ENCODE measurements at regions of chr1 and their contacts with region 1.

Region 1: DNA sequence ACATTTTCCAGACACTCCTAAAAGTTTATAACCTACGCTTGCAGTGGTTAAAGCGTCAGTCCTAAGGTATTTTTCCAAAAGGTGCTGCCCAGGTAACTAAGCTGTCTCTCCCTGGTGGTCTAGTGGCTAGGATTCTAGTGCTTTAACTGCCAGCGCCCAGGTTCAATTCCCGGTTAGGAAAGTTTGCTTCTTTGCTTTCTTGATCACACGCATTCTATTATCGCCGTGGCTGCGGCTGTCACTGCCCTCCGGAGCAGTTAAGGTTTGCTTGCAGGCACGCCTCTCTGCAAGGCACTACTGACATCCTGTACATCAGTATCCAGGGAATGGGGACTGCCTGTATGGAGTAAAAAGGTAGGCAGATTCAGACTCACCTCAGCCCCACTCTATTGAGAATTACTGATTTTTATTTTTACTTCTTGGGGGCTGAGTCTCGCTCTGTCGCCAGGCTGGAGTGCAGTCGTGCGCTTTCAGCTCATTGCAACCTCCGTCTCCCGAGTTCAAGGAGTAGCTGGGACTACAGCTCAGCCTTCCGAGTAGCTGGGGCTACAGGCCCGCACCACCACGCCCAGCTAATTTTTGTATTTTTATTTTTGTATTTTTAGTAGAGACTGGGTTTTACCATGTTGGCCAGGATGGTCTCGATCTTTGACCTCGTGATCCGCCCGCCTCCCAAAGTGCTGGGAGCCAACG is 53.2 kb upstream of the CFAP126 start:
- DNase-seq: no peak
- H3K4me3 ChIP-seq: no peak overlapping the region
- H3K27ac ChIP-seq: no peak overlapping the region
- H3K4me1 ChIP-seq: peaks cover 0 to 3% (median 0%) of the 10 kb centered on the region in 4 donors
- H3K27me3 ChIP-seq: no peaks in the 10 kb centered on the region
- CTCF ChIP-seq: no peak
- EP300 ChIP-seq: no peak
- POLR2A ChIP-seq: no peak

Region 2: DNA sequence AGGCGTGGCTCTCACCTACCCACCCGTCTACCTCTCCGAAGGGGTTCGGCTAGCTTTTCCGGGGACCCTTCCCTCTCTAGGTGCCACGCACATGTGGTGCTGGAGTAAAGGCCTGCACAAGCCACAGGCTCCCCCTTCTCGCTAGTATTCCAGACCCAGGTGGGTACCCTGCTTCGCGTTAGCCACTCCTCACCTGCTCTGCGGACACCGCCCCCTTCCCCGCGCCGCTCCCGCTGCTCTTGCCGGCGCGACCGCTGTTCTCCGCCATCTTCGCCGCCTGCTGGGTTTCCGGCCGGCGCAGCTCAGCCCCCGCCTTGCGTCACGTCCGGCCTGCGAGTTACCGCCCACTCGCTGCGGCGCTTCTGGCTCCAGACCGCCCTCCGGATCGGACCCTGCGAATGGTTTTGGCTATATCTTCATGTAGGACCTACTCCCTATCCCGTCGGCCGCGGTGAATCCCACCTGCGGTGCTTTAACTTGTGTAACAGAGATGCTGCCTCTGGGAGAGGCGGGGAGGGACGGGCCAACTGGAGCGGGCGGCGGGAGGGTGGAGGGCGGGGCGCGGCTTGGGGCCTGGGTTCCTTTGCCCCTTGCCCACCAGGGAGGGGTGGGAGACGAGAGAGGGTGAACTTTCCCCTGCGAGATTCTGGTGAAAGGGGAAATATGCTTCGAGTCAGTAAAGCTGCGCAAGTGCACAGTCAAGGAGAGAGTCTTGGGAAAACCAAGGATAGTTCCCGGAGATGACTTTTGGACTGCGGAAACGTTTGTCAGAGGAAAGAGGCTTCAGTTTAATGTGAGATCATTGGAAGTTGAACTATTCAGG is 302.9 kb before region 1 on chr1 and contains the starts of genes NIT1 and PFDN2:
- in situ Hi-C with region 1: no loop called
- intact Hi-C with region 1: no loop called
- DNase-seq: peak; percentile 91
- H3K4me3 ChIP-seq: peak within 1 kb of the TSS; percentile 66 to 95 (median 78)
- H3K27ac ChIP-seq: peak within 1 kb of the TSS; percentile 93 to 98 (median 96)
- H3K4me1 ChIP-seq: peaks cover 26 to 59% (median 31%) of the 10 kb centered on the region in 4 donors
- H3K27me3 ChIP-seq: no peaks in the 10 kb centered on the region
- CTCF ChIP-seq: no peak
- EP300 ChIP-seq: no peak
- POLR2A ChIP-seq: peak; percentile 93
- total RNA-seq, gene NIT1: 45.6 to 83.0 (median 75.4) TPM
- total RNA-seq, gene PFDN2: 28.9 to 70.5 (median 45.9) TPM

Region 3: DNA sequence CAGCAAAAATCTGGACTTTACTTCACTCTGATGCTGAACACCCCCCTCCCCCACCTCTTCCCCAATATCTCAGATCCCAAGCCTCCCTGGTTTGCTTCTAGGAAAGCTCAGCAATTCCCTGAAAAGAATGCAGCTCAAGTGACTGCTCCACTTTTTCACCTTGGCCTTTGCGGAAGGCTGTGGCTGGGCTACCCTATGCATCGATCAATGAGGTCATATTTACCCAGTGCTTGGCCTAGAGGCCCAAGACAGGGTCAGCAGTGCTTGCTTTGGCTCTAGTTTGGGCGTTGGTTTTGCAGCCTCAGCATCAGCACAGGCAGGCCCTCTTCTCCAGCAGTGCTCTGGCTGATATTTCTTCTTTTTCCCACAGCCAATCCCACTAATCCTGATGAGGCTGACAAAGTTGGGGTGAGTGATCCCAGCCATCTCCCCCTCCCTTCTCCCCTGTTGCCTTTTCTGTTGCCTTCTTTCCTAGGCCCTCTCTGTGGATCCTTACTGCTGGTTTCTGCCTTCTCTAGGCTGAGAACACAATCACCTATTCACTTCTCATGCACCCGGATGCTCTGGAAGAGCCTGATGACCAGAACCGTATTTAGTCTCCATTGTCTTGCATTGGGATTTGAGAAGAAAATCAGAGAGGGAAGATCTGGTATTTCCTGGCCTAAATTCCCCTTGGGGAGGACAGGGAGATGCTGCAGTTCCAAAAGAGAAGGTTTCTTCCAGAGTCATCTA is 256.2 kb after region 1 on chr1:
- in situ Hi-C with region 1: no loop called
- intact Hi-C with region 1: loop called (anchors 5 kb)
- DNase-seq: no peak
- H3K4me3 ChIP-seq: no peak overlapping the region
- H3K27ac ChIP-seq: no peak overlapping the region
- H3K4me1 ChIP-seq: no peaks in the 10 kb centered on the region
- H3K27me3 ChIP-seq: peaks cover 10% of the 10 kb centered on the region
- CTCF ChIP-seq: no peak
- EP300 ChIP-seq: no peak
- POLR2A ChIP-seq: no peak